Sciatic nerve (tissue), 2 donors: ENCODE measurements at regions of chr17 and their contacts with region 1.

Region 1: DNA sequence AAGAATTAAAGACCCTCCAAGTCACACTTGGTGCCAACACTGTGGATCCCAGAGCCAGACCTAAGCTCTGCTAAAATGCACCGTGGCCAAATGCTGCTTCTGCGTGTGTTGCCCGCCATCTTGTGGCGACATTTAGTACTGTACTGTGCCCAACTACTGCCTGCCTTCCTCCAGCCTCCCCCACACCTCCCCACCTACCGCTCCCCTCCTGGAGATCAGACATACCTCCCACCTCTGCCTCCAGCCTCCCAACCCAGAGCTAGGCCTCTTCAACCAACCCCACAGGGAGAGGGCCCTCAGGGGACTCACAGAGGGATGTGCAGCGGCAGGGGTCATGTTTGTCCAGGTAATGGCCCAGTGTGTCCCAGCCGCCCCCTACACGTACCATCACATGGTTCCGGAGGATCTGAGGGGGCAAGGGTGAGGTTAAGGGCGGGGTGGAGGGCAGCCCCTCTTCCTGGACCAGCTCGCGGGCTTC is 5.5 kb downstream of the GAS2L2 start:
- DNase-seq: peak; percentile 88
- ATAC-seq: peak; percentile 84

Region 2: DNA sequence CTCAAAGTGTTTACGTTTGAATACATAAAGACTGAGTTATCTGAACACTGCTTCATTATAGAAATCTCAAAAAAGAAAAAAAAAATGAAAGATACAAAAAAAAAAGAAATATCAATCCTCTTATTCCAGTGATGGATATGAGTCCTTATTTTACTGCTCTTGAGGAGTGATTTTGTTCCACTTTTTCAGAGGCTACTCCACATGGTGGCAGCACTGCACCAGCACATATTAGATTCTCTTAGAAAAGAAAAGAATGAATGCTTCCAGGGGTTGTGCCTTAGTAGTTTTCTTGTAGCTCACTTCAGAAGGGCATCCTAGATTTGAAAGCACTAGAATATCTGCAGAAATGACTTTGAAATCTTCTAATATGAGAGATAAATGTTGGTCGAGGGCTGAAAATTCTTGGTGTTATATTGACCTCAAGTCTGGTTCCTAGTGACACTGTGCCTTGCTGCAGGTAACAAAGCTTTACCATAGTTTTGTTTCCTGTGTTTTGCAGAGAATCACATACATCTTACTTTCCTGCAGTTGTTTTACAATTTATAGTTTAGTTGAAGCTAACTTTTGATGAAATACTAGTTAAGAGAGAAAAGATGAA is 134.6 kb before region 1 on chr17:
- intact Hi-C with region 1: loop called (anchors 10 kb)
- DNase-seq: peak; percentile 66
- ATAC-seq: no peak